BJ (cell line): ENCODE measurements at regions of chr3 and their contacts with region 1.

Region 1: DNA sequence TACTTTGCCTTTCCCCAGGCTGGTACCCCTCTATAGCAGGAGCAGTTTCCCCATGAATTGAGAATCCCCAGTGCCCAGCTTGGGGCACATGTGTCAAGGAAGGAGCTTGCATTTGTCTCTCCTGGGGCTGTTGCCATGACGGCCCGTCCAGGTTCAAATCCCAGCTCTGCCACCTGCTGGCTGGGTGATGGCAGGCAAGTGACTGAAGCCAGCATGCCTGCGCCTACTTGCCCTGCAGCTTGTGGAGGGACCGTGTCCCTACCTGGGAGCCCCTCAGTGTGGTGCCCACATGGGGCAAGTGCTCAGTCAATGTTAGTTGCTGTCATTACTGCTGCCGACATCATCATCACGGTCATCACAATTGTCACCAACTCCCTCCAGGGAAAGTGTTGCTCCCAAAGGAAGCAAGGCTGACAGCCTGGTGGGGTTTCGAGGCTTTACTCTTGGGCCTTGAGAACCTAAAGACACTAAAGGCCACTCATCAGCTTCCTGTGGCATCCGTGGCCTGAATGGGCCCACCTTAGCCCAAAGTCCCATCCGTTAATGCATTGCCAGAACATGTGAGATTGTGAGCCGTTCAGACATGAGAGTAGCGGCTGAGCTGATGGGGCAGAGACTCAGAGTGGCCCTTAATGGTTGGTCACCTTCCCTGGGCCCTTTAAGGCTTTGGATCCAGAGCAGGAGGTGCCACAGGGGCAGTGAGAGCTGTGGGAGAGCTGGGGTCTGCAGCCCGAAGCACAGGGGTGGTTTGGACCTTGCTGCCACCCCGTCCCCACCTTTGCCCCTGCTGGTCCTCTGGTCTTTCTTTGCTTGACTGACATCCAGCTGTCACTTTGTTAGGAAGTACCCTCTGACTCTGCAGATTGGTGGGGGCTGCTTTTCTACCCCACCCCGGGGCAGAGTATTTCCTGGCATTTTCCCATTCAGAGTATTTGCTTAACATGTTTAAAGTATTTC is 144.3 kb downstream of the DNAJB8 start:
- DNase-seq: no peak
- H3K4me3 ChIP-seq: no peak overlapping the region
- H3K27me3 ChIP-seq: no peaks in the 10 kb centered on the region
- CTCF ChIP-seq: peak; percentile 68

Region 2: GRCh38 chr3:128170805-128171516 is 151.4 kb before region 1 on chr3:
- CTCF ChIA-PET with region 1: interaction called, 14 read pairs
- POLR2A ChIA-PET with region 1: no interaction called
- DNase-seq: peak; percentile 39
- H3K4me3 ChIP-seq: no peak overlapping the region
- H3K27me3 ChIP-seq: no peaks in the 10 kb centered on the region
- CTCF ChIP-seq: peak; percentile 91

Region 3: GRCh38 chr3:128178782-128179483 is 143.4 kb before region 1 on chr3:
- CTCF ChIA-PET with region 1: interaction called, 13 read pairs
- POLR2A ChIA-PET with region 1: no interaction called
- DNase-seq: no peak
- H3K4me3 ChIP-seq: no peak overlapping the region
- H3K27me3 ChIP-seq: no peaks in the 10 kb centered on the region
- CTCF ChIP-seq: no peak

Region 4: DNA sequence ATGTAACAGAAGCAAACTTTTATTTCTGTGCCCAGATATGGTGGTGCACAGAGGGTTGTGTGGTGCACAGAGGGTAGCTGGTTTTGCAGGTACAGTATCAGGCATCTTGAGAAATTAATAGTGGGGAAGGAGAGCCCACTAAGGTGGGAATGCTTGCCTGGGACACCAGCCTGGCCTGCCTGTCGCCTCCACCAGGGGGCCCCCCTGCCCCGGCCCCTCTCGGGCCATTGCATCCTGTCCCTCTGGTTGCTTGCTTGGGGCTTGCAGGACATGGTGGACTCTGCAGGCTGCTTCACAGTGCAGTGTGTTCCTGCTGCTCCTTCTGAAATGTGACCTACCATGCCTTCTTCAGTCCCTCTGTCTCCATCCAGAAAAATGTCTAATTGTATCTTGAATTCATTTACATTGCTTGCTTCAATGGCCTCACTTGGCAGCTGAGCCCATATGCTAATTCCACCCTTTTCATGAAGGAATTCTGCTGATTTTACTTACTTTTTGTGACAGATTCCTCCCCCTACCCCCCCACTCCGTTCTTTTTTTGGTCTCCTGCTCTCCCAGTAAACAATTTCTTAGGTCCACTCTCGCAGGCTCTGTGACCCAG is 95.4 kb before region 1 on chr3:
- CTCF ChIA-PET with region 1: interaction called, 13 read pairs
- POLR2A ChIA-PET with region 1: no interaction called
- DNase-seq: no peak
- H3K4me3 ChIP-seq: no peak overlapping the region
- H3K27me3 ChIP-seq: no peaks in the 10 kb centered on the region
- CTCF ChIP-seq: peak; percentile 79

Region 5: GRCh38 chr3:128262457-128262987 is 59.8 kb before region 1 on chr3:
- CTCF ChIA-PET with region 1: no interaction called
- POLR2A ChIA-PET with region 1: no interaction called
- DNase-seq: no peak
- H3K4me3 ChIP-seq: no peak overlapping the region
- H3K27me3 ChIP-seq: no peaks in the 10 kb centered on the region
- CTCF ChIP-seq: no peak

Region 6: DNA sequence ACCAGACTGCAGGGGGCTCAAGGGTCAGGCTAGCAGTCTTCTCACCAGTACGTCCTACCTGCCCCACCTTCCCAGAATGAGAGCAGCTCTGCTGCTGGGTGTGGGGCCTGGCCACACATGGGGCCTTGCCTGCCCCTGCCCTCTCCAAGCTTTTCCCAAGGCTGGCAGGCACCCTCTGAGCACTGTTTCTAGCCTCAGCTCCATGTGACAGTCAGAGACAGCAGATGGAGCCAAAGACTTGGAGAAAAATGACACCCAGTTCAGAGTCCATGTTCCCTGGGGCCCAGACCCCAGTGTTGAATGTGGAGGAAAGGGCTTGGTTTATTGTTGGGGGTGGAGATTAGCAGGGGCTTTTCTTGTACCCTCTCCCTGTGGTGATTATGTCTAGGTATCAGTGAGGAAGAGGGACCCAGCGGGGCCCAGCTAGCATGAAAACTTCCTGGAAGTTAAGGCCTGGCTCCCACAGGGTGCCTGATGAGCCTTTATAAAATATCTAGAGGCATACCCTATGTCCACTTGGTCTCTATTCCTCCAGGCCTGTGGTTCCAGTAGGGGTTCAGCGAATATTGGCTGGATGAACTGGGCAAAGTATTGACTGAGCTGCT is 15.2 kb before region 1 on chr3:
- CTCF ChIA-PET with region 1: interaction called, 10 read pairs
- POLR2A ChIA-PET with region 1: no interaction called
- DNase-seq: no peak
- H3K4me3 ChIP-seq: no peak overlapping the region
- H3K27me3 ChIP-seq: no peaks in the 10 kb centered on the region
- CTCF ChIP-seq: no peak

Region 7: DNA sequence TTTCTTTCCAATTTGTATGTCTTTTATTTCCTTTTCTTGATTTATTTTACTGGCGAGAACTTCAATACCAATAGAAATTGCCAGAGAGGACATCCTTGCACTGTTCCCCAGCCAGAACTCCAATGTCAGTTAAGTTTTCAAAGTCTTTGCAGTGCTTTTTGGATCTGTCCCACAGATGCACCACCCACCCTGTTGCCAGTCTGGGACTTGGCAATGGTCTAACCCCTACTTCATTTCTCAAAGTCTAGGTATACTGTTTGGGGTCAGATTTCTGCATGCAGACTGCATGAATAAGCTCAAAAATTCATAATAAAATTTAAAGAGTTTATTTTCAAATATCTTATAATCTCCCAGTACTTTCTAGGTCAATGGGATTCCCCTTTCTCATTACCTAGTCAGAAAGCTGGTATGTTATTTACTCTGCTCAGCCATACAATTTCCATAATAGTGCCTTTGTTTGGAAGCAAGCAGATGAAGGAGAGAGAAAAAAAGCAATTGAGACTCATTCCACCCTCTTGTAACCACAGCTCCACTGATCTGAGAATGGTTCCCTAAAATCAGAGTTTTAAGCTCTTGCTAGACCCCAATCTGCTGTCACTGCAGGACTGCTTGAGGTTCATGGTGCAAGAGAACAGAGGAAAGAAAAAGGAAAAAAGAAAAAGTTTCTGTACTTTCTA is 1410.0 kb after region 1 on chr3:
- CTCF ChIA-PET with region 1: no interaction called
- POLR2A ChIA-PET with region 1: no interaction called
- DNase-seq: no peak
- H3K4me3 ChIP-seq: no peak overlapping the region
- H3K27me3 ChIP-seq: no peaks in the 10 kb centered on the region
- CTCF ChIP-seq: no peak